MCF 10A (cell line): ENCODE measurements at regions of chr14 and their contacts with region 1.

Region 1: DNA sequence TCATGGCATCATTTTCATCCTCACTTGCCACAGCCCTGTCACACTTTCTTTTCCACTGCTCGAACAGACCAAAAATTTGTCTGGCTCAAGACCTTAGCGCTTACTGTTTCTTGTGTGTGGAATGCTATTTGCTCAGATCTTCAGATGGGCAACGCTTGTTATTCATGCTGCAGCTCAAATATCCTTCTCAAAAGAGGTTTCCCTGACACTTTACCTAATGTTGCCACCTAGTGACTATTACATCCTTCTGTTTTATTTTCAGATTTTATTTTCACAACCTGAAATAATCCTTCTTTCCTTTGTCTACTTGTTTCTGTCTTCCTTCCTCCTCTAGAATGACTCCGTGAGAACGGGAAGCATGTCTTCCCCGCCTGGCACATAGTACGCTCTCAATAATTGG is 5.6 kb downstream of the FBXO33 start:
- DNase-seq: peak; percentile 54
- H3K4me3 Mint-ChIP-seq: no peak overlapping the region
- H3K27ac Mint-ChIP-seq: no peak overlapping the region
- H3K4me1 Mint-ChIP-seq: peaks cover 40% of the 10 kb centered on the region
- H3K27me3 Mint-ChIP-seq: no peaks in the 10 kb centered on the region
- CTCF ChIP-seq: peak; percentile 16

Region 2: GRCh38 chr14:39102969-39103957 is 323.3 kb before region 1 on chr14 and contains the start of gene SEC23A:
- CTCF ChIA-PET with region 1: interaction called, 15 read pairs
- POLR2A ChIA-PET with region 1: interaction called, 57 read pairs
- intact Hi-C with region 1: loop called (anchors 1 kb)
- DNase-seq: peak; percentile 88
- H3K4me3 Mint-ChIP-seq: peak within 1 kb of the TSS; percentile 95
- H3K27ac Mint-ChIP-seq: peak within 1 kb of the TSS; percentile 98
- H3K4me1 Mint-ChIP-seq: peaks cover 16% of the 10 kb centered on the region
- H3K27me3 Mint-ChIP-seq: no peaks in the 10 kb centered on the region
- CTCF ChIP-seq: no peak
- total RNA-seq, gene SEC23A: 79.3 and 82.4 TPM in 2 replicates

Region 3: DNA sequence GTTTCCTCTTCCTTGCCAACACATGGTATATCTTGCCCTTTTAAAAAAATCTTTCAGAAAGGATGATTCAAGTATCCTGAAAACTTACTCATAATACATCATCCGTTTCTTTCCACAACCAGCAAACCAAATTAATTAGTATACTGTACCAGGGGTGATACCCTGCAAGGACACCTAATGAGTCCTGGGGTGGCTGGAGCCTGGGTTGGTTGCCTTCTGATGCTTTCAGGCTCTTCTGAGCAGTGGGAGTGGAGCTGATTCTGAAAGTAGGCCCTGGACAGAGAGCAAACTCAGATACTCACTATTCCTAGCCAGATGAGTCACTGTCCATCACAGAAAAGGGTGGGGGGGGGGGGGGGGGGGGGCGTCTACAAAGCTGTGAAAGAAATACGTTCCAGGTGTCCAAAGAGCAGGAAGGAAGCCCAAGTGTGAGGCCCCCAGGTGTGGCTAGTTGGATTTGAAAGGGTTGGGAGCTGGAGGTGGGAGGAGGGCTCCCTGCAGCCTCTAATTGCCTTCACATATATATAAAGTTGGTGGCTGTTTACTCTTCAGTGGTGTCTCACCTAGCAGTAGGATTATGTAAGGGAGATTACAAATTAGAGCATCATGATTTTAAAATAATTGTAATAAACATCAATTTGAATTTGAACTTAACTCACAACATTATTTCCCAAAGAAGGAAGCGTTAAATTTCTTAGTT is 30.9 kb before region 1 on chr14:
- CTCF ChIA-PET with region 1: interaction called, 11 read pairs
- POLR2A ChIA-PET with region 1: interaction called, 4 read pairs
- intact Hi-C with region 1: no loop called
- DNase-seq: no peak
- H3K4me3 Mint-ChIP-seq: no peak overlapping the region
- H3K27ac Mint-ChIP-seq: no peak overlapping the region
- H3K4me1 Mint-ChIP-seq: no peaks in the 10 kb centered on the region
- H3K27me3 Mint-ChIP-seq: no peaks in the 10 kb centered on the region
- CTCF ChIP-seq: no peak